ENCODE measurements at regions of chr7 and their contacts with region 1.

Region 1: GRCh38 chr7:129122751-129123509 is 21.6 kb upstream of the TSPAN33 start:
- DNase-seq: peak; percentile 60
- ATAC-seq: peak; percentile 88
- H3K4me3 ChIP-seq: no peak overlapping the region
- H3K4me3 Mint-ChIP-seq: peak overlapping the region; percentile 61
- H3K27ac ChIP-seq: peak overlapping the region; percentile 53 to 68
- H3K27ac Mint-ChIP-seq: peak overlapping the region; percentile 87
- H3K4me1 ChIP-seq: peaks cover 21% of the 10 kb centered on the region in 2 donors
- H3K4me1 Mint-ChIP-seq: peaks cover 33% of the 10 kb centered on the region
- H3K27me3 ChIP-seq: no peaks in the 10 kb centered on the region
- H3K27me3 Mint-ChIP-seq: no peaks in the 10 kb centered on the region
- CTCF ChIP-seq: no peak

Region 2: DNA sequence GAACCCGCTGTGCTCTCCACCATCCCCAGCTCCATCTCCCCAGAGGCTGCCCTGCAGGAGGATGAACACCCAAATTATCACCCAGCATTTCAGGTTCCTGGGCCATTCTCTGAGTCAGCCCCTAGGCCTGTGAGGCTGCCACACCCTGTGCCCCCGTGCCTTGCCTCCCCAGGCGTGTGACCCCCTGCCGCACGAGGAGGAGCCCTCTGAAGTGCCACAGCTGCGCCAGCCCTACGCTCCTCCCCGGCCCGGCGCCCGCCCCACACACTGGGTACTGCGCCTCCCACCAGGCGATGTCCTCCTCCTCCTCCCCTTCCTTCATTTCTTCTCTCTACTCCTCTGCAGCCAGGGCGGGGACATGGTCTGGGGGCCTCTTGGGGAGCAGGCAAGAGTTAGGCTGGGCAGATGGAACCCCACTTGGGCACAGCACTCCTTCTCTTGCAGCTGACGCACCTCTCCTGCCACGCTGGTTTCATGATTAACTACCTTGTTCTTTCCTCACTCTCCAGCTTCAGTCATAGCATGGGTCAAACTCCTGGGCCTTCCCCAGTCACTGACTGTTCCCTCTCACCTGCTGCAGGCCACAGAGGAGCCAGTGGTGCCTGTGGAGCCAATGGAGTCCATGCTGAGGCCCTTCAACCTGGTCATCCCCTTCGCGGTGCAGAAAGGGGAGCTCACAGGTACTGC is 273.0 kb before region 1 on chr7:
- CTCF ChIA-PET with region 1: no interaction called
- POLR2A ChIA-PET with region 1: no interaction called
- intact Hi-C with region 1: no loop called
- DNase-seq: no peak
- ATAC-seq: no peak
- H3K4me3 ChIP-seq: no peak overlapping the region
- H3K4me3 Mint-ChIP-seq: no peak overlapping the region
- H3K27ac ChIP-seq: no peak overlapping the region
- H3K27ac Mint-ChIP-seq: no peak overlapping the region
- H3K4me1 ChIP-seq: no peaks in the 10 kb centered on the region
- H3K4me1 Mint-ChIP-seq: no peaks in the 10 kb centered on the region
- H3K27me3 ChIP-seq: no peaks in the 10 kb centered on the region
- H3K27me3 Mint-ChIP-seq: no peaks in the 10 kb centered on the region
- CTCF ChIP-seq: no peak

Region 3: GRCh38 chr7:128937647-128938543 is 185.0 kb before region 1 on chr7 and contains the start of gene IRF5:
- CTCF ChIA-PET with region 1: no interaction called
- POLR2A ChIA-PET with region 1: no interaction called
- intact Hi-C with region 1: no loop called
- DNase-seq: peak; percentile 65
- ATAC-seq: peak; percentile 6
- H3K4me3 ChIP-seq: peak within 1 kb of the TSS; percentile 69 to 90 (median 84)
- H3K4me3 Mint-ChIP-seq: peak within 1 kb of the TSS; percentile 94
- H3K27ac ChIP-seq: peak within 1 kb of the TSS; percentile 89 to 99
- H3K27ac Mint-ChIP-seq: peak within 1 kb of the TSS; percentile 93
- H3K4me1 ChIP-seq: peaks cover 58 to 72% of the 10 kb centered on the region in 2 donors
- H3K4me1 Mint-ChIP-seq: peaks cover 69% of the 10 kb centered on the region
- H3K27me3 ChIP-seq: no peaks in the 10 kb centered on the region
- H3K27me3 Mint-ChIP-seq: no peaks in the 10 kb centered on the region
- CTCF ChIP-seq: no peak
- total RNA-seq, gene IRF5: 135 and 137 TPM in 2 replicates

Region 4: GRCh38 chr7:129136887-129137642 is 14.1 kb after region 1 on chr7:
- CTCF ChIA-PET with region 1: no interaction called
- POLR2A ChIA-PET with region 1: interaction called, 16 read pairs
- intact Hi-C with region 1: loop called (anchors 2 kb)
- DNase-seq: peak; percentile 82
- ATAC-seq: peak; percentile 88
- H3K4me3 ChIP-seq: peak overlapping the region in 4 of 5 experiments; percentile 4 to 62 (median 18)
- H3K4me3 Mint-ChIP-seq: peak overlapping the region; percentile 85
- H3K27ac ChIP-seq: peak overlapping the region; percentile 90 to 93
- H3K27ac Mint-ChIP-seq: peak overlapping the region; percentile 99
- H3K4me1 ChIP-seq: peaks cover 44 to 65% of the 10 kb centered on the region in 2 donors
- H3K4me1 Mint-ChIP-seq: peaks cover 55% of the 10 kb centered on the region
- H3K27me3 ChIP-seq: no peaks in the 10 kb centered on the region
- H3K27me3 Mint-ChIP-seq: no peaks in the 10 kb centered on the region
- CTCF ChIP-seq: no peak

Region 5: GRCh38 chr7:129144095-129144833 is 21.3 kb after region 1 on chr7 and contains the start of gene TSPAN33:
- CTCF ChIA-PET with region 1: interaction called, 4 read pairs
- POLR2A ChIA-PET with region 1: interaction called, 16 read pairs
- intact Hi-C with region 1: loop called (anchors 1 kb)
- DNase-seq: peak; percentile 78
- ATAC-seq: peak; percentile 75
- H3K4me3 ChIP-seq: peak within 1 kb of the TSS; percentile 84 to 100 (median 92)
- H3K4me3 Mint-ChIP-seq: peak within 1 kb of the TSS; percentile 99
- H3K27ac ChIP-seq: peak within 1 kb of the TSS; percentile 81 to 97
- H3K27ac Mint-ChIP-seq: peak within 1 kb of the TSS; percentile 99
- H3K4me1 ChIP-seq: peaks cover 44 to 59% of the 10 kb centered on the region in 2 donors
- H3K4me1 Mint-ChIP-seq: peaks cover 59% of the 10 kb centered on the region
- H3K27me3 ChIP-seq: no peaks in the 10 kb centered on the region
- H3K27me3 Mint-ChIP-seq: no peaks in the 10 kb centered on the region
- CTCF ChIP-seq: no peak
- total RNA-seq, gene TSPAN33: 111 and 117 TPM in 2 replicates

Region 6: GRCh38 chr7:129188372-129188891 is 65.5 kb after region 1 on chr7 and contains the start of gene SMO:
- CTCF ChIA-PET with region 1: no interaction called
- POLR2A ChIA-PET with region 1: no interaction called
- intact Hi-C with region 1: no loop called
- DNase-seq: peak; percentile 46
- ATAC-seq: peak; percentile 66
- H3K4me3 ChIP-seq: peak within 1 kb of the TSS in 4 of 5 experiments; percentile 41 to 76 (median 57)
- H3K4me3 Mint-ChIP-seq: peak within 1 kb of the TSS; percentile 85
- H3K27ac ChIP-seq: no peak within 1 kb of the TSS
- H3K27ac Mint-ChIP-seq: peak within 1 kb of the TSS; percentile 5
- H3K4me1 ChIP-seq: peaks cover 15 to 17% of the 10 kb centered on the region in 2 donors
- H3K4me1 Mint-ChIP-seq: peaks cover 22% of the 10 kb centered on the region
- H3K27me3 ChIP-seq: peaks cover 0 to 36% (median 18%) of the 10 kb centered on the region in 4 experiments
- H3K27me3 Mint-ChIP-seq: peaks cover 33% of the 10 kb centered on the region
- CTCF ChIP-seq: no peak
- total RNA-seq, gene SMO: 0.39 and 0.87 TPM in 2 replicates

Region 7: GRCh38 chr7:129210256-129210988 is 87.5 kb after region 1 on chr7:
- CTCF ChIA-PET with region 1: no interaction called
- POLR2A ChIA-PET with region 1: no interaction called
- intact Hi-C with region 1: no loop called
- DNase-seq: peak; percentile 82
- ATAC-seq: peak; percentile 90
- H3K4me3 ChIP-seq: no peak overlapping the region
- H3K4me3 Mint-ChIP-seq: no peak overlapping the region
- H3K27ac ChIP-seq: no peak overlapping the region
- H3K27ac Mint-ChIP-seq: no peak overlapping the region
- H3K4me1 ChIP-seq: no peaks in the 10 kb centered on the region
- H3K4me1 Mint-ChIP-seq: peaks cover 3% of the 10 kb centered on the region
- H3K27me3 ChIP-seq: no peaks in the 10 kb centered on the region
- H3K27me3 Mint-ChIP-seq: no peaks in the 10 kb centered on the region
- CTCF ChIP-seq: peak; percentile 84

Measured in B cell (primary cell).